Left ventricle myocardium superior (tissue), 1 donor: ENCODE measurements at regions of chr11 and their contacts with region 1.

Region 1: GRCh38 chr11:57527056-57527631 is 3.4 kb downstream of the TIMM10 start:
- DNase-seq: peak; percentile 80
- ATAC-seq: peak; percentile 17

Region 2: GRCh38 chr11:57493507-57494503 is 33.3 kb before region 1 on chr11:
- intact Hi-C with region 1: loop called (anchors 5 kb)
- DNase-seq: peak; percentile 71
- ATAC-seq: peak; percentile 76

Region 3: DNA sequence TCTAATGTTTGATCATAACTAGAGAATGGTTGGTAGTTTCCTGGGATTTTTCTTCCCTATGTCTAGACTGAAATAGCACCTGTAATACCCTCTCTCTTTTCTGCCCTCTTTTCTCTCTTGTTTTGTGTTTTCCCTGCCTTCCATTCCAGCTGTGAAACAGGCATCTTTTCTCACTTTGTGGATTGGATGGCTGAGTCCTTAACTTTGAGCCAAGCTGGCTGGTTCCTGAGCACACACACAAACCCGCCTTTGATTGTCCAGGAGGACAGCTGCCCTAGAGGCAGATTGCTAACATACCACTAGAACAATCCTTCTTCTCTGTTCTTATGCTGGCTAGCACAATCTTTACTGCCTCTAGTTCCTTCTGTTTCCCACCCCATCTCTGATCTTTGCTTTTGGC is 252.1 kb after region 1 on chr11:
- intact Hi-C with region 1: no loop called
- DNase-seq: peak; percentile 40
- ATAC-seq: peak; percentile 75